WTC11 (cell line): ENCODE measurements at regions of chr12 and their contacts with region 1.

Region 1: DNA sequence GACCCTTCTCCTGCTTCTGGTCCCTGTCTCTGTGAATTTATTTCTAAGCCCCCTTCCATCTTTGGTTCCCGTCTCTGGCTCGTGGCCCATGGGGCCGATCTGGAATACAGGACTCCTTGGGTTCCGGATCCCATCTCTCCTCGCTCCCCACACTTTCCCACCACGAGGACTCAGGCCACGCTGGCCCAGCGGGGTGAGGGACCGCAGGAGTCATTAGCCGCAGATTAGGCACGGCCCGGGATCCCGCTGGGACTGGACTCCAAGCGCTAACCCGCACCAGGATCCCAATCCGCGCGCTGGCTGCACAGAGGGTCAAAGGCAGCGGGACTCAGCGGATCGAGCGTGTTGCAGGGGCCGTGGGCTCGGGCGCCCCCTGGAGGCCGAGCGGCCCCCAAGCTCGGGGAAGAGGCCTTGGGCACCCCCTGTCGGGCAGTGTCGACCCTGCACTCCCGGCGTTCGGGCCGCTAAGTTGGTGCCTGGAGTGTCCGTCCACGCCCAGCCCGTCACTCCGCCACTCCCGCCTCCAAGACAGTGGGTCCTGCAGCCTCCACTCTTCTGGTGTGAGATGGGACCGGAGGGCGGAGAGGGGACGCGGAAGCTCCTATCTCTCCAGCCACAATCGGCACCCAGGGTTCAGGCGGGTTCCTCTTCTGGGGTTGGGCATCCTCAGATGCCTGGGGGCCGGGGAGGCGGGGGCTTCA is 9.5 kb downstream of the SHMT2 start:
- DNase-seq: peak; percentile 90
- ATAC-seq: peak; percentile 10
- H3K4me3 Mint-ChIP-seq: peak overlapping the region; percentile 84
- H3K27ac Mint-ChIP-seq: no peak overlapping the region; the same call in 1 of the 2 replicates
- H3K4me1 Mint-ChIP-seq: peaks cover 66% of the 10 kb centered on the region
- H3K27me3 Mint-ChIP-seq: peaks cover 89% of the 10 kb centered on the region
- CTCF ChIP-seq: peak; percentile 100

Region 2: GRCh38 chr12:56935752-56936151 is 303.3 kb before region 1 on chr12:
- CTCF ChIA-PET with region 1: no interaction called
- POLR2A ChIA-PET with region 1: no interaction called
- DNase-seq: no peak
- ATAC-seq: no peak
- H3K4me3 Mint-ChIP-seq: no peak overlapping the region
- H3K27ac Mint-ChIP-seq: no peak overlapping the region
- H3K4me1 Mint-ChIP-seq: peaks cover 16% of the 10 kb centered on the region
- H3K27me3 Mint-ChIP-seq: peaks cover 10% of the 10 kb centered on the region
- CTCF ChIP-seq: no peak

Region 3: GRCh38 chr12:57124259-57124877 is 114.6 kb before region 1 on chr12:
- CTCF ChIA-PET with region 1: interaction called, 18 read pairs
- POLR2A ChIA-PET with region 1: no interaction called
- DNase-seq: peak; percentile 84
- ATAC-seq: peak; percentile 59
- H3K4me3 Mint-ChIP-seq: no peak overlapping the region
- H3K27ac Mint-ChIP-seq: no peak overlapping the region
- H3K4me1 Mint-ChIP-seq: peaks cover 15% of the 10 kb centered on the region
- H3K27me3 Mint-ChIP-seq: peaks cover 6% of the 10 kb centered on the region
- CTCF ChIP-seq: peak; percentile 92

Region 4: GRCh38 chr12:57203201-57203600 is 35.8 kb before region 1 on chr12:
- CTCF ChIA-PET with region 1: no interaction called
- POLR2A ChIA-PET with region 1: no interaction called
- DNase-seq: no peak
- ATAC-seq: no peak
- H3K4me3 Mint-ChIP-seq: no peak overlapping the region
- H3K27ac Mint-ChIP-seq: no peak overlapping the region
- H3K4me1 Mint-ChIP-seq: no peaks in the 10 kb centered on the region
- H3K27me3 Mint-ChIP-seq: no peaks in the 10 kb centered on the region
- CTCF ChIP-seq: no peak

Region 5: DNA sequence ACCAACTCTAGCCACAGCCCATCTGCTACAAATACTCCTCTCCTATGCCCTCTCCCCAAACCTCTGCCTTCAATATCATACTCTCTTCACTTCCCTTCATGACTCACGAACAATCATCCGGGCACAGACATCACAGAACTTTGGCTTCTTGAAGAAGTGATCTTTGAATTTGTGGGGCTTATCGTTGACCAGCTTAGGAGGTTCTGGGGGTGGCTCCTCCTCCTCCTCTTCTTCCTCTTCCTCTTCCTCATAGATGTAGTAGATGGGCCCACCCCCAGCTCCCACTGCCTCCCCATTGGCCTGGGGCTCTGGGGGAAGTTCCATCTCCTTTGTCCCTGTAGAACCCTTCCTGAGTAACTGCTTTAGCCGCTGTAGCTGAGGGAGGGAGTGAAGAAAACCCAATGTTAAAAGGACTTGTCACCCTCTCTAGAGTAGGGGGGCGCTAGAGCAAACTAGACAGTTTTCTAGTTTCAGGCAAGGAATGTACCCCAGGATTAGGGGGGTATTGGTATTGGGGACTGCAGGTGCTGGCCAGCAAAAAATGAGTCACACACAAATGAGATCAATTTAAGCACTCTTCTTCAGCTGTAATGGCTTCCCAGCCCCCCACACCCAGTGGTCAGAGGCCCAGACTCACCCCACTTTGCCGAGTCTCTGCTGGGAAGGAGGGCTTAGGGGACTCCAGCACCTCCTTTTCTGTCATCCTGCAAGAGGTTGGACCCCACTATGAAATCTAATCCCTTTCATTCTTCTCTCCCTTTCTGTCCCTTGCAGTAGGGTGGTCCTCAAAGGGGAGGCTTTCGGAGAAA is 10.1 kb after region 1 on chr12:
- CTCF ChIA-PET with region 1: interaction called, 16 read pairs
- POLR2A ChIA-PET with region 1: interaction called, 3 read pairs
- DNase-seq: peak; percentile 7
- ATAC-seq: peak; percentile 6; the same call in 1 of the 2 replicates
- H3K4me3 Mint-ChIP-seq: no peak overlapping the region
- H3K27ac Mint-ChIP-seq: peak overlapping the region; percentile 11; the same call in 1 of the 2 replicates
- H3K4me1 Mint-ChIP-seq: peaks cover 50% of the 10 kb centered on the region
- H3K27me3 Mint-ChIP-seq: peaks cover 10% of the 10 kb centered on the region
- CTCF ChIP-seq: no peak

Region 6: DNA sequence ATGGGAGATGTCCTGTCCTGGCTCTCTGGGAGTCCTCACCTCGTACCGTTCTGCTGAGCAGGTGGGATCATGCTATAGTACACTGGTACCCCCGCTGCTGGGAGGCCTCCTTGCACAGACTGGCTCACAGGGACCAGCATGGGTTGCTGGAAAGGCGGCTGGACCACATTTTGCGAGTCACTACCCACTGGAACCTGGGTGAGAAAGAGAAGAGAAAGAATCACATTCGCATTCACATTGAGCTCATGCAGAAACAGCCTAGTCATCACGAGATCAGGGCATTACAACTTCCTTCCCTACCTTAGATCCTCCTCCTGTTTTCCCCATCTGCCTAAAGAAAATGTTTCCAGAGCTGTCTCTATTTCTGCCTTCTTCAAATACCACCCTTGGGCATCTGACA is 29.3 kb after region 1 on chr12:
- CTCF ChIA-PET with region 1: interaction called, 14 read pairs
- POLR2A ChIA-PET with region 1: no interaction called
- DNase-seq: no peak
- ATAC-seq: no peak
- H3K4me3 Mint-ChIP-seq: no peak overlapping the region
- H3K27ac Mint-ChIP-seq: no peak overlapping the region
- H3K4me1 Mint-ChIP-seq: no peaks in the 10 kb centered on the region
- H3K27me3 Mint-ChIP-seq: no peaks in the 10 kb centered on the region
- CTCF ChIP-seq: no peak

Region 7: GRCh38 chr12:57476162-57476992 is 237.4 kb after region 1 on chr12:
- CTCF ChIA-PET with region 1: interaction called, 13 read pairs
- POLR2A ChIA-PET with region 1: no interaction called
- DNase-seq: peak; percentile 68
- ATAC-seq: peak; percentile 44
- H3K4me3 Mint-ChIP-seq: peak overlapping the region; percentile 77
- H3K27ac Mint-ChIP-seq: no peak overlapping the region
- H3K4me1 Mint-ChIP-seq: peaks cover 35% of the 10 kb centered on the region
- H3K27me3 Mint-ChIP-seq: peaks cover 99% of the 10 kb centered on the region
- CTCF ChIP-seq: peak; percentile 63